ENCODE measurements at regions of chr13 and their contacts with region 1.

Region 1: DNA sequence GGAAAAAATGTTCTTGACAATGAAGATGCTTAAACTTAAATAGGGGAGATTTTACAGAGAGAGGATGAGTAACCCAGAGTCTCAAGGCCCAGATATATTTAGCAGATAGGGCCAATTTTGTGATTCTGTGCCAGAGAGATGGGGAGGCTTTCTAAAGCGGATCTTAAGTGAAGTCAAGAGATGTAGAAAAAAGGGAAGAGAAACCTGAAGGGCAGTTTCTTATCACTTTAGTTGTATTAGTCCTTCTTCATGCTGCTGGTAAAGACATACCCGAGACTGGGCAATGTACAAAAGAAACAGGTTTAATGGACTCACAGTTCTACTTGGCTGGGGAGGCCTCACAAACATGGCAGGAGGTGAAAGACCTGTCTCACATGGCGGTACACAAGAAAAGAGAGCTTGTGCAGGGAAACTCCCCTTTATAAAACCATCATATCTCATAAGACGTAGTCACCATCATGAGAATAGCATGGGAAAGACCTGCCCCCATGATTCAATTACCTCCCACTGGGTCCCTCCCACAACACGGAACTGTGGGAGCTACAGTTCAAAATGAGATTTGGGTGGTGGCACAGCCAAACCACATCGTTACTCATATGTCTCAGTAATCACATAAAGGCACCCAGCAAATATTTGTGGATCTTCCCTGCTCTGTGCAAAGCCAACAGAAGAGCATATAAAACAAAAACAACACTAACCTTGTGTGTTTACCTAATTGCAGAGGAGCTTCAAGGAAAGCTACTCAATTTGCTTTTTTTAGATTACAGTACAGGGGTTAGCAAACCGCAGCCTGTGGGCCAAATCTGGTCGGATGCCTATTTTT is 102.6 kb upstream of the MYCBP2 start:
- DNase-seq: peak; percentile 74
- ATAC-seq: peak; percentile 88
- H3K4me3 Mint-ChIP-seq: no peak overlapping the region
- H3K27ac Mint-ChIP-seq: peak overlapping the region; percentile 81
- H3K4me1 Mint-ChIP-seq: peaks cover 17% of the 10 kb centered on the region
- H3K27me3 Mint-ChIP-seq: peaks cover under 1% of the 10 kb centered on the region

Region 2: GRCh38 chr13:77345150-77345780 is 84.3 kb before region 1 on chr13:
- CTCF ChIA-PET with region 1: no interaction called
- POLR2A ChIA-PET with region 1: interaction called, 3 read pairs
- intact Hi-C with region 1: loop called (anchors 1 kb)
- DNase-seq: peak; percentile 33
- ATAC-seq: peak; percentile 90
- H3K4me3 Mint-ChIP-seq: peak overlapping the region; percentile 11
- H3K27ac Mint-ChIP-seq: peak overlapping the region; percentile 72
- H3K4me1 Mint-ChIP-seq: peaks cover 15% of the 10 kb centered on the region
- H3K27me3 Mint-ChIP-seq: no peaks in the 10 kb centered on the region

Region 3: DNA sequence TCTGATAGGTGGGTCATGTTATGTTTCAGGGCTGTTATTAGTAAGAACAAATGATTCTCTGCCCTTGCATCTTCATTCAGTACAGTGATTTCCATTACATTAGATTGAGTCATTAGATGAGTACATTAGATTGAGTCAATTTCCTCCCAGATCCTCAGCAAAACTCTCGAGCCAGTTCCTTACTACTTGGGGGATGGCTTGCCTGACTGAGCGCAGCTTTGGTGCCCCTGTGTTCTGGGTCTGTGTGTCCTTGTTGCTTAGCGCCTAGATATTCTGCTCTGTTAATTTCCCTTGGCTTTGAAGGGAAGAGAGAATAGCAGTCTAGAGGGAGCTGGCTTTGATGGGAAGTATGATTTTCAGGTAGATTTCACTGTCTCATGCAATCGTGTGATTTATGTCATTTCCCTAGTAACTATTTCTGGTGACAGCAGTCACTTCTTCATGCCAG is 86.8 kb after region 1 on chr13:
- CTCF ChIA-PET with region 1: no interaction called
- POLR2A ChIA-PET with region 1: no interaction called
- intact Hi-C with region 1: no loop called
- DNase-seq: peak; percentile 25
- ATAC-seq: peak; percentile 88
- H3K4me3 Mint-ChIP-seq: no peak overlapping the region
- H3K27ac Mint-ChIP-seq: peak overlapping the region; percentile 55
- H3K4me1 Mint-ChIP-seq: peaks cover 16% of the 10 kb centered on the region
- H3K27me3 Mint-ChIP-seq: no peaks in the 10 kb centered on the region

Measured in activated CD4-positive, alpha-beta T cell treated with anti-CD3 and anti-CD28 coated beads for 36 hours (primary cell).